ENCODE measurements at regions of chr17 and their contacts with region 1.

Region 1: DNA sequence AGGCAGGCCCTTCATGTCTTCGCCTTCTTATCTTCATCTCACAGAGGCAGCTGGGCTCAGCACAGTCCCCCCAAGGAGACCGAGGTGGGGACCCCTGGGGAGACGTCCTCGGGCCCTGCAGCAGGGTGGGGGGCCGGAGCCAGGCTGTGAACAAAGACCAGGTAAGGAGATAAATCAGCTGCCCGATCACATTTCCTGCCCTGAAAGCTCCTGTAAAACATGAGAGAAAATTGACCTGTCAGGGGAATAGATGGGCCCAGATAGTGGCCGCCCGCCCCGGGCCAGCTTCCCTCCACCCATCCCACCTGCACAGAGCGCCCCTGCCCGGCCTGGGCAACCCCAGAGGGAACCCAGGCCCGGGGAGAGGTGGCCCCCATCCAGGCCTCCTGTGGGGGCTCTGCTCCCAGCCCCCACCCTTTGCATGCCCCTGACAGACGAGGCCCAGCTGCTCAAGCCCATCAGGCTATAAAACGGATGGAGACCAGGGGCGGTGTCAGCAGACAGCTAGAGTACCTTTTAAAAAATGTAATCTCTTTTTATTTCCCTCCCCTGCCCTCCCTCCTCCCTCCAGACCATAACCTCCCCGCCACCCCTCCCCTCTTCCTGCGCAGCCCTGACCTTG is 18.8 kb upstream of the SLC38A10 start:
- DNase-seq: no peak
- H3K4me3 ChIP-seq: no peak overlapping the region
- H3K27ac ChIP-seq: peak overlapping the region in 1 of 59 donors; percentile 0
- H3K27me3 ChIP-seq: no peaks in the 10 kb centered on the region
- CTCF ChIP-seq: no peak

Region 2: DNA sequence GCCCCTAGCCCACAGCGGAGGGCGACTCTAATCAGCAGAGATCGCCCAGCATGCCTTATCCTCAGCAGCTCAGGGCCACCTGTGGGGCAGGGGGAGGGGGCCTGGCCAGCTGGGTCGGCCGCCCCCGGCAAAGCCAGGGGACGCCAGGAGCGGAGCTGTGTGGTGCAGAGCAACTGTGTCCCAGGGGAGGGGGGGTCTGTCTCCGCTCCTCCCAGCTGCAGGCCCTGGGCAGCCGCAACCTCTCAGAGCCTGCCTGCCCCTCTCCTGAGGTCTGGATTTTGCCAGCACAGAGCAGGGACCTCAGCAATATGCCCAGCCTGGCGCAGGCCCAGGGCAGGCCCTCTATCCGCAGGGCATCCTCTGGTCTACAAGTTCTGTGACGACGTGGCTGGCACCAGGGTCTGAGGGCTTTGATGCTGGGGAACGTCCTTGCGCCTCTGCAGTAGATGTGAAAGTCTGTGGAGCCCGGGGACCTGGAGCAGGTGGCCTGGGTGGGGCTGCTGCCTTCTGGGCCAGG is 17.7 kb after region 1 on chr17:
- intact Hi-C with region 1: loop called in 1 of 2 experiments (anchors 2 kb)
- DNase-seq: no peak
- H3K4me3 ChIP-seq: no peak overlapping the region
- H3K27ac ChIP-seq: no peak overlapping the region
- H3K27me3 ChIP-seq: peaks cover 0 to 5% (median 0%) of the 10 kb centered on the region in 45 donors
- CTCF ChIP-seq: no peak

Region 3: DNA sequence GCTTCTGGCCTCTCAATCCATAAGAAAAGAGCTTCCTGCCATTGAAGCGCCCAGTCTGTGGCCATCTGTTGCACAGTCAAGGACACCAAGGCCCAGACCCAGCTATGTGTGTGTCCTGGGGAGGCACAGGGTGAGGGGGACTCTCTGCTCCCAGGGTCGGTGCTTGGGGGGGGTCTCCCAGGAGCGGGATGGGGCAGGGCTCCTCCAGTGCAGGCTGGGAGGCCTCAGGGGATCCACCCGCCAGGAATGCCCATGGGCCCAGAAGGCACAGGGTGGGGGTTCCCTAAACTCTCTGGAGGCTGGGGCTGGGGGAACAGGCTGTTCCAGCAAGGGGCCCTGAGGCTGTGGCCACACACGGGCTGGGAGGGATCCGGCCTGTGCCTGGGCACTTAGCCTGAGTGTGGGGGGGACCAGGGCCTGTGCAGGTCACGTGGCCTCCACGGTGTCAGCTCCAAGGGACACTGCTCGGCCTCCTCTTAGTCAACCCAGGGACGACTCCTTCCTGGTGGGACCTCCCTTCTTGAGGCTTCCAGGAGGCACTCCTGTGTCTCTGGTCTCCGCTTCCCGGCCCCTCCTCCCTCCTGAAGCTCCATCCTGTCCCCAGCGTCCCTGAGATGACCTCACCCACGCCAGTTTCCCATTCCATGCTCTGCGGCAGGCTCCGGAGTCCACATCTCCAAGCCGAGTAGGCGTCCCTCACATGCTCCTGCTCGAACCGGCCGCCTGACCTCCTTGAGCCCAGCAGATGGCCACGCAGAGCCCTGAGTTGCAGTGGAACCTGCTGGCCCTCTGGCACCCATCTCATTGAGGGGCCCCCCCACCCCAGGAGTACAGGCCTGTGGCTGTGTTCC is 58.2 kb after region 1 on chr17:
- intact Hi-C with region 1: no loop called
- DNase-seq: peak in 9 of 10 donors; percentile 63 to 86 (median 76)
- H3K4me3 ChIP-seq: no peak overlapping the region
- H3K27ac ChIP-seq: peak overlapping the region in 57 of 59 donors; percentile 20 to 91 (median 80)
- H3K27me3 ChIP-seq: peaks cover 0 to 2% (median 0%) of the 10 kb centered on the region in 45 donors
- CTCF ChIP-seq: peak in 14 of 56 donors; percentile 6 to 39 (median 22)

Measured in dorsolateral prefrontal cortex (tissue), 120 donors.